ENCODE measurements at regions of chr10 and their contacts with region 1.

Region 1: DNA sequence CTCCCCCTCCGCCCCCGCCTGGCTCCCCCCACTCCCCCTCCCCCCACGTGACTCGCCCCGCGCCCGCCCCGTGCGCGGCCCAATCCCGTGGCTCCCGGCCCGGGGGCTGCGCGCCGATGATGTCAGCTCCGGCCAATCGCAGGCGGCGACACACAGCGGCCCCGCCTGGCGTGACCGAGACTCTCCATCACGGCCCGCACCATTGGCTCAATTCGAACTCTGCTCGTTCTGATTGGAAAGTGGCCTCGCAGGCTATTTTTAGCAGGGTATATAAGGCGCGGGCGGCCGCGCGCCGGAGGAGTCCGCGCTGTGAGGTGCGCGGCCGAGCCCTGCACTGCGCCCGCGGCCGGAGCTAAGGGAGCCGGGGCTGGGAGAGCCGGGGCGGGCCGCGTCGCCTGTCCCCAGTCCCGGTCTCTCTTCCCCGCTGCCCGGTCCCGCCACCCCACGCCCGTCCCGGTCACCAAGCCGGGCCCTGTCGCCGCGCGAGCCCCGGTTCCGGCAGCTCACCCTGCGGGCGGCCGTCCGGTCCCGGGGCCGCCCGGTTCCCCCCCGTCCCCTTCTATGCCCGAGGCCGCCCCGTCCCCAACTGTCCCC is 345 bp upstream of the KLF6 start:
- DNase-seq: peak; percentile 99 to 100 (median 100)
- H3K4me3 ChIP-seq: peak overlapping the region; percentile 75 to 95
- H3K4me3 Mint-ChIP-seq: peak overlapping the region; percentile 90 to 99 (median 96)
- H3K27ac ChIP-seq: peak overlapping the region; percentile 97
- H3K27ac Mint-ChIP-seq: peak overlapping the region; percentile 98 to 100 (median 98)
- H3K4me1 ChIP-seq: peaks cover 23% of the 10 kb centered on the region
- H3K4me1 Mint-ChIP-seq: peaks cover 8 to 55% (median 24%) of the 10 kb centered on the region in 4 donors
- H3K27me3 ChIP-seq: no peaks in the 10 kb centered on the region
- H3K27me3 Mint-ChIP-seq: peaks cover 0 to 2% of the 10 kb centered on the region in 2 donors

Region 2: DNA sequence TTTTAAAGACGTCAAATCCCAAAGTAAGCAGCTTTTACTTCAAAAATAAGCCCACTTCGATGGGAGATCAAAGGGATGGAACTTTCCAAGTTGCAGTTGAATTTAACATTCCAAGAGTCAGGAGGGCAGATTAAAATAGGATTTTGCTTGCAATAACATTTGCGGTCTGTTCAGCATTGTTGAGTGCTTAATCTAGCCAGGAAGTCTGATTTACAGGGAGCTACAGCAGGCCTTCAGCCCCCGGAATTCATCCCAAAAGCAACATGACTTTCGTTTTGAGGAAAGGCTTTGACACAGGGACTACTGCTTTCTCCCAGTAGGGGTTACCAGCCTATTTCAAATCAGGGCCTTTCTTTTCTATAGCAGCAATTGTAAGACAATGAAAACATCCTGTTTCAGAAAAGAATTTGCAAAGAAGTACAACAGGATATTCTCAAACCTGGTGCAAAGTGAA is 333.2 kb before region 1 on chr10:
- CTCF ChIA-PET with region 1: interaction called, 3 read pairs
- POLR2A ChIA-PET with region 1: interaction called, 6 read pairs
- intact Hi-C with region 1: loop called (anchors 2 kb)
- DNase-seq: no peak
- H3K4me3 ChIP-seq: no peak overlapping the region
- H3K4me3 Mint-ChIP-seq: no peak overlapping the region
- H3K27ac ChIP-seq: no peak overlapping the region
- H3K27ac Mint-ChIP-seq: peak overlapping the region in 3 of 7 donors; percentile 19 to 67 (median 43)
- H3K4me1 ChIP-seq: peaks cover 10% of the 10 kb centered on the region
- H3K4me1 Mint-ChIP-seq: peaks cover 8 to 26% (median 9%) of the 10 kb centered on the region in 4 donors
- H3K27me3 ChIP-seq: no peaks in the 10 kb centered on the region
- H3K27me3 Mint-ChIP-seq: peaks cover 12 to 13% of the 10 kb centered on the region in 2 donors

Region 3: GRCh38 chr10:3805791-3806461 is 20.6 kb after region 1 on chr10:
- CTCF ChIA-PET with region 1: interaction called, 39 read pairs
- POLR2A ChIA-PET with region 1: interaction called, 1,468 read pairs
- intact Hi-C with region 1: loop called (anchors 1 kb)
- DNase-seq: peak; percentile 42 to 84 (median 55)
- H3K4me3 ChIP-seq: peak overlapping the region; percentile 2 to 41
- H3K4me3 Mint-ChIP-seq: peak overlapping the region in 7 of 8 donors; percentile 38 to 85 (median 76)
- H3K27ac ChIP-seq: peak overlapping the region; percentile 99
- H3K27ac Mint-ChIP-seq: no peak overlapping the region
- H3K4me1 ChIP-seq: peaks cover 98% of the 10 kb centered on the region
- H3K4me1 Mint-ChIP-seq: peaks cover 4 to 75% (median 69%) of the 10 kb centered on the region in 4 donors
- H3K27me3 ChIP-seq: no peaks in the 10 kb centered on the region
- H3K27me3 Mint-ChIP-seq: no peaks in the 10 kb centered on the region

Region 4: GRCh38 chr10:3873728-3874461 is 88.5 kb after region 1 on chr10:
- CTCF ChIA-PET with region 1: interaction called, 14 read pairs
- POLR2A ChIA-PET with region 1: interaction called, 509 read pairs
- intact Hi-C with region 1: loop called (anchors 1 kb)
- DNase-seq: peak; percentile 67 to 93 (median 90)
- H3K4me3 ChIP-seq: no peak overlapping the region
- H3K4me3 Mint-ChIP-seq: peak overlapping the region; percentile 9 to 72 (median 63)
- H3K27ac ChIP-seq: peak overlapping the region; percentile 94
- H3K27ac Mint-ChIP-seq: peak overlapping the region; percentile 96 to 100 (median 99)
- H3K4me1 ChIP-seq: peaks cover 68% of the 10 kb centered on the region
- H3K4me1 Mint-ChIP-seq: peaks cover 49 to 76% (median 66%) of the 10 kb centered on the region in 4 donors
- H3K27me3 ChIP-seq: no peaks in the 10 kb centered on the region
- H3K27me3 Mint-ChIP-seq: no peaks in the 10 kb centered on the region

Region 5: GRCh38 chr10:3948843-3949242 is 163.5 kb after region 1 on chr10:
- CTCF ChIA-PET with region 1: no interaction called
- POLR2A ChIA-PET with region 1: interaction called, 248 read pairs
- intact Hi-C with region 1: loop called (anchors 1 kb)
- DNase-seq: peak; percentile 83 to 93 (median 88)
- H3K4me3 ChIP-seq: no peak overlapping the region
- H3K4me3 Mint-ChIP-seq: peak overlapping the region; percentile 64 to 85 (median 83)
- H3K27ac ChIP-seq: peak overlapping the region; percentile 52
- H3K27ac Mint-ChIP-seq: peak overlapping the region; percentile 93 to 98 (median 97)
- H3K4me1 ChIP-seq: peaks cover 67% of the 10 kb centered on the region
- H3K4me1 Mint-ChIP-seq: peaks cover 43 to 80% (median 59%) of the 10 kb centered on the region in 4 donors
- H3K27me3 ChIP-seq: no peaks in the 10 kb centered on the region
- H3K27me3 Mint-ChIP-seq: no peaks in the 10 kb centered on the region

Region 6: GRCh38 chr10:4034907-4035598 is 249.7 kb after region 1 on chr10:
- CTCF ChIA-PET with region 1: no interaction called
- POLR2A ChIA-PET with region 1: interaction called, 22 read pairs
- intact Hi-C with region 1: no loop called
- DNase-seq: peak in 3 of 5 donors; percentile 7 to 21 (median 16)
- H3K4me3 ChIP-seq: peak overlapping the region in 1 of 2 donors; percentile 2
- H3K4me3 Mint-ChIP-seq: peak overlapping the region; percentile 29 to 90 (median 82)
- H3K27ac ChIP-seq: peak overlapping the region; percentile 26
- H3K27ac Mint-ChIP-seq: peak overlapping the region; percentile 57 to 89 (median 76)
- H3K4me1 ChIP-seq: peaks cover 27% of the 10 kb centered on the region
- H3K4me1 Mint-ChIP-seq: peaks cover 17 to 31% (median 26%) of the 10 kb centered on the region in 4 donors
- H3K27me3 ChIP-seq: no peaks in the 10 kb centered on the region
- H3K27me3 Mint-ChIP-seq: no peaks in the 10 kb centered on the region

Region 7: GRCh38 chr10:4656576-4657182 is 871.3 kb after region 1 on chr10:
- CTCF ChIA-PET with region 1: interaction called, 4 read pairs
- POLR2A ChIA-PET with region 1: interaction called, 5 read pairs
- intact Hi-C with region 1: loop called (anchors 1 kb)
- DNase-seq: peak in 4 of 5 donors; percentile 50 to 61 (median 58)
- H3K4me3 ChIP-seq: no peak overlapping the region
- H3K4me3 Mint-ChIP-seq: no peak overlapping the region
- H3K27ac ChIP-seq: no peak overlapping the region
- H3K27ac Mint-ChIP-seq: no peak overlapping the region
- H3K4me1 ChIP-seq: peaks cover 7% of the 10 kb centered on the region
- H3K4me1 Mint-ChIP-seq: peaks cover 9 to 10% (median 10%) of the 10 kb centered on the region in 4 donors
- H3K27me3 ChIP-seq: no peaks in the 10 kb centered on the region
- H3K27me3 Mint-ChIP-seq: peaks cover 1 to 4% of the 10 kb centered on the region in 2 donors